Lower lobe of right lung (tissue), 2 donors: ENCODE measurements at regions of chr4 and their contacts with region 1.

Region 1: DNA sequence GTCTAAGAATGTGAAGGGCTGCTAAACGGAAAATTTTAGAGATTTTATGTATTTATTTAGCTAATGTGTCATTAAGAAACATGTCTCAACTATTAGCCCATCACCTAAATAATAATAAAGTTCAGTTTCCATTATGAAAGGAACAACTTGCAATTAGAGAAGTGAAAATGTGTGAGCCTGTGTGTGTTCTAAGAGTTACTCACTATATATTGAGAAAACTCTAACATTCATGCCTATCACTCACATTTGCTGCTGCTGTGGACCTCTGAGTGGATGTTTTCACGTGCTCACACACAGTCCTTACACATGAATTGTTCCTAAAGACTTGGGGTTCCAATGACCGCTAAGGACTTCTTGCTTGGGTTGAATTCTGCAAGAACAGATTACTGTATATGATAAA is 364.0 kb downstream of the TMA16 start:
- DNase-seq: no peak
- ATAC-seq: no peak
- H3K4me3 ChIP-seq: no peak overlapping the region
- H3K27ac ChIP-seq: no peak overlapping the region
- H3K4me1 ChIP-seq: no peaks in the 10 kb centered on the region
- H3K27me3 ChIP-seq: no peaks in the 10 kb centered on the region
- CTCF ChIP-seq: no peak

Region 2: DNA sequence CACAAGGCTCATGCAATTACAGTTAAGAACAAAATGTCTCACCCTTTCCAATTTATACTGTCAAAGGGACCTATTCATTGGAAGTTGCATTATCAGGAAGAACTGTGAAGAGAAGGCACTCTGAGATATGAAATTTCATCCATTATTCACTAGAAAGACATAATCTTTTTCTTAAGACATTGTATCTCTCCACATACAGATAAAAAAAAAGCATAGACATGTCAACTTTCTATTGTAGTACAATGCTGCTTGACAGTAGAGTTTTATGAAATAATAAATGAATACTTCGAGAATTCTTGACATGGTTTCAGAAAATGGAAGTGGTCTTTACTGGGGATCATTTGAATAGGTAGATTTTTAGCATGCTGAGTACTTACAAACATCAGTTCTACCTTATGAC is 181.0 kb after region 1 on chr4:
- intact Hi-C with region 1: no loop called
- DNase-seq: no peak
- ATAC-seq: no peak
- H3K4me3 ChIP-seq: no peak overlapping the region
- H3K27ac ChIP-seq: no peak overlapping the region
- H3K4me1 ChIP-seq: no peaks in the 10 kb centered on the region
- H3K27me3 ChIP-seq: no peaks in the 10 kb centered on the region
- CTCF ChIP-seq: no peak

Region 3: GRCh38 chr4:164440199-164440598 is 581.7 kb after region 1 on chr4:
- intact Hi-C with region 1: loop called (anchors 10 kb)
- DNase-seq: no peak
- ATAC-seq: no peak
- H3K4me3 ChIP-seq: no peak overlapping the region
- H3K27ac ChIP-seq: no peak overlapping the region
- H3K4me1 ChIP-seq: no peaks in the 10 kb centered on the region
- H3K27me3 ChIP-seq: no peaks in the 10 kb centered on the region
- CTCF ChIP-seq: no peak